Activated B cell treated with CpG ODN at 0.5 μM for 24 hours (primary cell): ENCODE measurements at regions of chr10 and their contacts with region 1.

Region 1: DNA sequence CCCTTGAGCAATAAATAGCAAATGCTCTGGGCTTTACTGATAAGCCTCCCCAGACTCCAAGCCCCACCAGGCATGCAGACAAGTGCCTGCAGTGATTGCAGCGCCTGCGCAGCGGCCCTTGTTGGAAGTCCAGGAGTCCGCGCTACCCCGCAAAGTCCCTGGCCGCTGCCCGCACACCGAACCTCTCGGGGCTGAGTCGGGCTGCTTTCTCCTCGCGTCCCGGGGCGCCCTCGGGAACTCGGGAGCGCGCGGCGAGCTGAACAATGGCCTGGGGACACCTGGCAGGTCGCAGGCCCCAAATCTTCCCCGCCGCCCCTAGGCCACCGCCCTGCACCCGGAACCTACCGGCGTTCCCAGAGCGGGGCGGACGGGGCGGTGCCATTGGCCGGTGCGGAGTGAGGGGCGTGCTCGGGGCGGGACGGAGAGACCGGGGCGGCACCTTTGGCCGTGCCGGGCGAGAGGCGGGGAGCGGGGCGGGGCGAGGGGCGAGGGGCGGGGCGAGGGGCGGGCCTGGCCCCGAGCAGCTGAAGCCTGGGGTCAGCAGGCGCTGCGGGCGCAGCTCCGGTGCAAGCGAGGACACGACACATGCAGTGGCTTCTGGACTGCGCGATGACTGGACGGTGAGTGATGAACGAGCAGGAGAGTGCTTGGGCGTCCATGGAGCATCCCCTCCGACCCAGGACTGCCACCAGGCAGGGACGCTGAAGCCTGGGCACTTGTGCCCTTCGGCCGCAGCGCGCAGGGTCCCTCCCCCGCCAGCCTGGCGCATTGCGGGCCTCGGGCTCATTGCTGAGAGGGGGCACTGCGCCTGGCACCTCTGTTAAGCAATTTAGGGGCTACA is at the start of gene RASSF4:
- DNase-seq: peak; percentile 90
- ATAC-seq: peak; percentile 99
- H3K4me3 Mint-ChIP-seq: peak within 1 kb of the TSS; percentile 85
- H3K27ac Mint-ChIP-seq: peak within 1 kb of the TSS; percentile 80
- H3K4me1 Mint-ChIP-seq: peaks cover 53% of the 10 kb centered on the region
- H3K27me3 Mint-ChIP-seq: no peaks in the 10 kb centered on the region
- CTCF ChIP-seq: no peak
- total RNA-seq, gene RASSF4: 2.0 and 2.5 TPM in 2 replicates

Region 2: GRCh38 chr10:44774676-44775401 is 184.6 kb before region 1 on chr10:
- CTCF ChIA-PET with region 1: no interaction called
- POLR2A ChIA-PET with region 1: no interaction called
- intact Hi-C with region 1: no loop called
- DNase-seq: no peak
- ATAC-seq: no peak
- H3K4me3 Mint-ChIP-seq: no peak overlapping the region
- H3K27ac Mint-ChIP-seq: no peak overlapping the region
- H3K4me1 Mint-ChIP-seq: no peaks in the 10 kb centered on the region
- H3K27me3 Mint-ChIP-seq: peaks cover 9% of the 10 kb centered on the region
- CTCF ChIP-seq: no peak

Region 3: GRCh38 chr10:44818701-44819127 is 140.8 kb before region 1 on chr10:
- CTCF ChIA-PET with region 1: no interaction called
- POLR2A ChIA-PET with region 1: no interaction called
- intact Hi-C with region 1: no loop called
- DNase-seq: no peak
- ATAC-seq: no peak
- H3K4me3 Mint-ChIP-seq: no peak overlapping the region
- H3K27ac Mint-ChIP-seq: no peak overlapping the region
- H3K4me1 Mint-ChIP-seq: no peaks in the 10 kb centered on the region
- H3K27me3 Mint-ChIP-seq: peaks cover 3% of the 10 kb centered on the region
- CTCF ChIP-seq: no peak

Region 4: GRCh38 chr10:44947371-44948152 is 11.9 kb before region 1 on chr10:
- CTCF ChIA-PET with region 1: no interaction called
- POLR2A ChIA-PET with region 1: interaction called, 6 read pairs
- intact Hi-C with region 1: loop called (anchors 1 kb)
- DNase-seq: peak; percentile 17
- ATAC-seq: peak; percentile 71
- H3K4me3 Mint-ChIP-seq: peak overlapping the region; percentile 26
- H3K27ac Mint-ChIP-seq: no peak overlapping the region
- H3K4me1 Mint-ChIP-seq: peaks cover 45% of the 10 kb centered on the region
- H3K27me3 Mint-ChIP-seq: no peaks in the 10 kb centered on the region
- CTCF ChIP-seq: no peak

Region 5: GRCh38 chr10:45000752-45001380 is 41.4 kb after region 1 on chr10 and contains the start of gene ZNF22:
- CTCF ChIA-PET with region 1: no interaction called
- POLR2A ChIA-PET with region 1: interaction called, 7 read pairs
- intact Hi-C with region 1: loop called (anchors 1 kb)
- DNase-seq: peak; percentile 76
- ATAC-seq: peak; percentile 82
- H3K4me3 Mint-ChIP-seq: peak within 1 kb of the TSS; percentile 90
- H3K27ac Mint-ChIP-seq: peak within 1 kb of the TSS; percentile 93
- H3K4me1 Mint-ChIP-seq: peaks cover 25% of the 10 kb centered on the region
- H3K27me3 Mint-ChIP-seq: no peaks in the 10 kb centered on the region
- CTCF ChIP-seq: no peak
- total RNA-seq, gene ZNF22: 34.2 and 37.5 TPM in 2 replicates